K562 (cell line): ENCODE measurements at regions of chr19 and their contacts with region 1.

Region 1: GRCh38 chr19:44570984-44571684 is 41.7 kb upstream of the CEACAM20 start:
- DNase-seq: peak; percentile 67 to 86 (median 68)
- ATAC-seq: peak; percentile 94
- H3K4me3 ChIP-seq: no peak overlapping the region
- H3K27ac ChIP-seq: no peak overlapping the region
- H3K4me1 ChIP-seq: peaks cover 12 to 33% of the 10 kb centered on the region in 2 experiments
- H3K27me3 ChIP-seq: no peaks in the 10 kb centered on the region
- CTCF ChIP-seq: peak; percentile 78 to 87 (median 80)
- EP300 ChIP-seq: no peak
- POLR2A ChIP-seq: no peak
- RAD21 ChIP-seq: peak; percentile 82 to 83

Region 2: GRCh38 chr19:44552324-44552723 is 18.8 kb before region 1 on chr19:
- CTCF ChIA-PET with region 1: no interaction called
- POLR2A ChIA-PET with region 1: interaction called, 4 read pairs
- in situ Hi-C with region 1: no loop called
- intact Hi-C with region 1: loop called (anchors 1 kb)
- DNase-seq: peak; percentile 70 to 78 (median 72)
- ATAC-seq: peak; percentile 83
- H3K4me3 ChIP-seq: no peak overlapping the region
- H3K27ac ChIP-seq: no peak overlapping the region; the same call in 2 of the 3 replicates
- H3K4me1 ChIP-seq: peaks cover 9 to 15% of the 10 kb centered on the region in 2 experiments; a peak in 4 of 5 replicates
- H3K27me3 ChIP-seq: no peaks in the 10 kb centered on the region
- CTCF ChIP-seq: peak; percentile 82 to 96 (median 87)
- EP300 ChIP-seq: peak; percentile 15; the same call in 1 of the 2 replicates
- POLR2A ChIP-seq: no peak
- RAD21 ChIP-seq: peak; percentile 36 to 75; a peak in 3 of 4 replicates

Region 3: DNA sequence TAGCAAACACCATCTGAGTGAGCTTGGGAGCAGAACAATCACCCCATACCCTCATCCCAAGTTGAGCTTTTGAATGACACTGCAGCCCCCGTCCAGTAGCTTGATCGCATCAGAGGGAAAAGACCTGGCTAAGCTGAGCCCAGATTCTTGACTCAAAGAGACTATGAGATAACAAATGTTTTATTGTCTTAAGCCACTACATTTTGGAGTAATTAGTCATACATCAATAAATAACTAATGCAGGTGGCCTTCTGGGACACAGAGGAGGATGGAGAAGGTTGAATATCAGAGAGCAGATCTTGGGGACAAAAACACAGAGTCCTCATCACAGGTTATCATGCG is 17.6 kb after region 1 on chr19:
- CTCF ChIA-PET with region 1: no interaction called
- POLR2A ChIA-PET with region 1: no interaction called
- in situ Hi-C with region 1: no loop called
- intact Hi-C with region 1: no loop called
- DNase-seq: no peak
- ATAC-seq: no peak
- H3K4me3 ChIP-seq: no peak overlapping the region
- H3K27ac ChIP-seq: peak overlapping the region; percentile 91
- H3K4me1 ChIP-seq: peaks cover 36 to 46% of the 10 kb centered on the region in 2 experiments
- H3K27me3 ChIP-seq: no peaks in the 10 kb centered on the region
- CTCF ChIP-seq: no peak
- EP300 ChIP-seq: no peak
- POLR2A ChIP-seq: no peak
- RAD21 ChIP-seq: no peak

Region 4: DNA sequence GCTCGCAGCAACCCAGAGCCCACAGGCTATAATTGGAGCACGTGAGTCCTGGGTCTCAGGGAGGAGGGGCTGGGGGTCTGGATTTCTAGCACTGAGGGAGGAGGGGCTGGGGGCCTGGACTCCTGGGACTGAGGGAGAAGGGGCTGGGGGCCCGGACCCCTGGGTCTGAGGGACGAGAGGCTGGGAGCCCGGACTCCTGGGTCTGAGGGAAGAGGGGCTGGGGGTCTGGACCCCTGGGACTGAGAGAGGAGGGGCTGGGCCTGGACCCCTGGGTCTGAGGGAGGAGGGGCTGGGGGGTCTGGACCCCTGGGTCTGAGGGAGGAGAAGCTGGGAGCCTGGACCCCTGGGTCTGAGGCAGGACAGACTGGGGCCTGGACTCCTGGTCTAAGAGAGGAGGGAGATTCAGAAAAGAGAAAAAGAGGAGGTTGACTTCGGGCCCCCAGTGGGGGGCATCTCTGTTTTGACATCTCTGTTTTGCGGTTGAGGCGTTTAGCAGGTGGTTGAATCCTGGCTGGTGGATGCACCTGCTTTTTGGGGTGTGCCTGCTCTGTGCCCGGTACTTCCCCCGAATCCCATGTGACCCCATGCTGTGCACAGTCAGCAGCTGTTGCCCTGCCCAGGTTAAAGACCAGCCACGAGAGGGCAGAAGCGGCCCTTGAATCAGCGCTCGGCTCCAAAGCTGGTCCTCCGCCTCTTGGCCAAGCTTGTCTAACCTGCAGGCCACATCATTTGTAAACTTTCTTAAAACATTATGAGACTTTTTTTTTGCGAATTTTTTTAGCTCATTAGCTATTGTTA is 83.0 kb after region 1 on chr19:
- CTCF ChIA-PET with region 1: interaction called, 14 read pairs
- POLR2A ChIA-PET with region 1: interaction called, 3 read pairs
- in situ Hi-C with region 1: loop called (anchors 5 kb)
- intact Hi-C with region 1: no loop called
- DNase-seq: peak; percentile 55 to 72 (median 58)
- ATAC-seq: peak; percentile 82
- H3K4me3 ChIP-seq: no peak overlapping the region
- H3K27ac ChIP-seq: no peak overlapping the region
- H3K4me1 ChIP-seq: peaks cover 0 to 13% of the 10 kb centered on the region in 2 experiments; a peak in 2 of 5 replicates
- H3K27me3 ChIP-seq: no peaks in the 10 kb centered on the region
- CTCF ChIP-seq: peak; percentile 78 to 83 (median 79)
- EP300 ChIP-seq: no peak
- POLR2A ChIP-seq: no peak
- RAD21 ChIP-seq: peak; percentile 69 to 70

Region 5: DNA sequence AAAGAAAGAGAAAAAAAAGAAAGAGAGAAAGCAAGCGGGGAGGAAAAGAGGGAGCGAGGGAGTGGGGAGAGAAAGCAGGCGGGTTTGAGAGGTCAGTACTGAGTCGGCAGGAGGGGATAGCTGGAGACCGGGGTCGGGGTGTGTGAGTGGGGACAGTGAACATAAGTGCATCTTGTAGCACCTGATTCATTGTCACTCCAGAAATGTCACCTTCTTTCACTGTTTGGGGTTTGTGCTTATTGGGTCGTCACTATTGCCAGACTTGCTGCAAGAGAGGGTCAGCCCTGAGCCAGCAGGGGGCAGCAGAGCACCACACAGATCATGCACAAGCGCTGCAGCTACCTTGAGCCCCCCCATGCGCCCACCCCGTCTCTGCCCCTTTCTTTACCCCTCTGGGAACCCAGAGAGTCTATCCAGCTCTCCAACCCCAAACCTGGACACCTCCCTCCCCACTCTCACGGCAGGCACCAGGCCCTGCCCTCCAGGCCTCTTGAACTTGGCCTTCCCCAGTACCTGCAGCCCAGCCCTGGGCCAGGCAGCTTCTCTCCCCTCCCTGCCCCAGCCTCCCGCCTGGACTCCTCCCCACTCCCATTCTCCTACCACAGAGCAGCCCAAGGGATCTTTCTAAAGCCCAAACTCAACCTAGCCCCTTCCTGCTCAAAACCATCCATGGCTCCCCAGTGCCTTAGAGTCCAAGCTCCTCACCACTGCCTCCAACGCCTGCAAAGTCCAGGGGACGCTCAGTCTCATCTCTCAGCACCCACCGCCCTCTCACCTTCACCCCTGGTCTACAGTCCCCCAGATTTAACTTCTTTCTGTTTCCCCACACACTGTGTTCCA is 118.1 kb after region 1 on chr19:
- CTCF ChIA-PET with region 1: no interaction called
- POLR2A ChIA-PET with region 1: no interaction called
- in situ Hi-C with region 1: no loop called
- intact Hi-C with region 1: loop called (anchors 10 kb)
- DNase-seq: peak; percentile 69 to 84 (median 72)
- ATAC-seq: peak; percentile 90
- H3K4me3 ChIP-seq: no peak overlapping the region
- H3K27ac ChIP-seq: no peak overlapping the region
- H3K4me1 ChIP-seq: peaks cover 17 to 26% of the 10 kb centered on the region in 2 experiments
- H3K27me3 ChIP-seq: no peaks in the 10 kb centered on the region
- CTCF ChIP-seq: peak; percentile 89 to 92 (median 90)
- EP300 ChIP-seq: no peak
- POLR2A ChIP-seq: no peak
- RAD21 ChIP-seq: peak; percentile 83 to 90

Region 6: GRCh38 chr19:44723952-44724319 is 152.8 kb after region 1 on chr19:
- CTCF ChIA-PET with region 1: no interaction called
- POLR2A ChIA-PET with region 1: no interaction called
- in situ Hi-C with region 1: loop called (anchors 5 kb)
- intact Hi-C with region 1: no loop called
- DNase-seq: peak; percentile 83 to 88 (median 86)
- ATAC-seq: peak; percentile 94
- H3K4me3 ChIP-seq: no peak overlapping the region
- H3K27ac ChIP-seq: no peak overlapping the region
- H3K4me1 ChIP-seq: peaks cover 20 to 23% of the 10 kb centered on the region in 2 experiments
- H3K27me3 ChIP-seq: no peaks in the 10 kb centered on the region
- CTCF ChIP-seq: peak; percentile 94 to 98 (median 98)
- EP300 ChIP-seq: no peak
- POLR2A ChIP-seq: no peak
- RAD21 ChIP-seq: peak; percentile 98 to 99

Region 7: DNA sequence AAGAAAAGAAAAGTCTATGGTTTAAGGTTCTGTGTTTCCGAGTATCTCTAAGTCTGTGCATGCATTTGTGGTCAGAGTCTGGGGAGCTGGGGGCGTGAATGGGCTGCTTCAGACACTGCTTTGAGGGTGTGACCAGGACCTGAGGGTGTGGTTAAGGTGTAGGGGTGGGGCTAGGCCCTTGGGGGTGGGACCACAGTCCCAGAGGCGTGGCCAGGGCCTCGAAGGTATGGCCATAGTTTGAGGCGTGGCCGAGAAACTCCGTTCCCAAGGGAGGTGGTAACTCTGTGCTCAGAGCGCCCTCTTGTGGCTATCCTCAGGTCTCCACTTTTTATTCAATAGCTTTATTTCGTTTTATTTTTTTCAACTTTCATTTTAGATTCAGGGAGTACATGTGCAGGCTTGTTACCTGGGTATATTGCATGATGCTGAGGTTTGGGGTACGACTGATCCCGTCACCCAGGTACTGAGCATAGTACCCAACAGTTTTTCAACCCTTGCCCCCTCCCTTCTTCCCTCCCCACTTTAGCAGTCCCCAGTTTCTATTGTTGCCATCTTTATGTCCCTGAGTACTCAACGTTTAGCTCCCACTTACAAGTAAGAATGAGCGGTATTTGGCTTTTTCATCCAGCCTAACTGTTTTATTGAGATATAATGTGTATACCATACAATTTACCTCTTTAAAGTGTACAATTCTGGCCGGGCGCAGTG is 199.6 kb after region 1 on chr19:
- CTCF ChIA-PET with region 1: no interaction called
- POLR2A ChIA-PET with region 1: interaction called, 3 read pairs
- in situ Hi-C with region 1: loop called (anchors 5 kb)
- intact Hi-C with region 1: loop called (anchors 2 kb)
- DNase-seq: peak; percentile 97 to 100 (median 99)
- ATAC-seq: peak; percentile 100
- H3K4me3 ChIP-seq: no peak overlapping the region
- H3K27ac ChIP-seq: no peak overlapping the region
- H3K4me1 ChIP-seq: peaks cover 4 to 10% of the 10 kb centered on the region in 2 experiments; a peak in 2 of 5 replicates
- H3K27me3 ChIP-seq: no peaks in the 10 kb centered on the region
- CTCF ChIP-seq: peak; percentile 78 to 97 (median 79)
- EP300 ChIP-seq: no peak
- POLR2A ChIP-seq: no peak
- RAD21 ChIP-seq: peak; percentile 97

Region 8: GRCh38 chr19:44777715-44778347 is 206.7 kb after region 1 on chr19 and contains the start of gene CBLC:
- CTCF ChIA-PET with region 1: no interaction called
- POLR2A ChIA-PET with region 1: interaction called, 3 read pairs
- in situ Hi-C with region 1: loop called (anchors 5 kb)
- intact Hi-C with region 1: no loop called
- DNase-seq: peak; percentile 30 to 87 (median 70)
- ATAC-seq: peak; percentile 90
- H3K4me3 ChIP-seq: no peak within 1 kb of the TSS
- H3K27ac ChIP-seq: no peak within 1 kb of the TSS
- H3K4me1 ChIP-seq: peaks cover 0 to 20% of the 10 kb centered on the region in 2 experiments; a peak in 2 of 5 replicates
- H3K27me3 ChIP-seq: no peaks in the 10 kb centered on the region
- CTCF ChIP-seq: peak in 2 of 3 experiments; percentile 17 to 22; a peak in 2 of 6 replicates
- EP300 ChIP-seq: no peak
- POLR2A ChIP-seq: no peak
- RAD21 ChIP-seq: no peak
- polyA plus RNA-seq, gene CBLC: not detected